H1 (cell line): ENCODE measurements at regions of chr2 and their contacts with region 1.

Region 1: DNA sequence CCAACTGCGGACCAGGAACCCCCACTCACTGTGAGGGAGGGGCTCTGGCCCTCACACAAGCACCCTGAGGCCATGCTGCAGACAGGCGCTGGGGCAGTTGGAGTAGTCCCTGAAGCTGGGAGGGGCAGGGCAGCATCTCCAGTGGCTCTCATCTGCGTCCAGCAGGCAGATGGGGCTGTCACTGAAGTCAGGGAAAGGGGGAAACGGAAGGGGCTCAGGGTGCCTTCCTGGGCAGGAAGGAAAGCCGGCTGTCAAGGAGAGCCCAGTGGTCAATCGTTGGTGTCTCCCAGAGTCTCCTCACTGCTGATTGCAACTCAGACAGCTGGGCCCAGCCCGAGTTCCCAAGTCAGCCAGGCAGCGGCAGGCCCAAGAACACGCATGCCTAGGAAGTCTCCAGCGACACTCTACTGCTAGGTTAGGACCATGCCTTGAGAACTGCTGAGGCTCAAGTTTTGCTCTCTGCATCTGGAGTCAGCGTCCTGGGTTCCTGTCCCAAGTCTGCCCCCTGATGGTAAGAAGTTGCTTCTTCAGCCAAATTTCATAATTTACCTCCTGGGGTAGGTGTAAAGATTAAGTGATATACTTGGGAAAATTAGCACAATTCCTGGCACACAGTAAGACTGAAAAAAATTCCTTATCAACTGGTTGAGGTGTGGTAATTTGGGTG is 27.5 kb upstream of the NMUR1 start:
- DNase-seq: peak; percentile 50 to 60
- H3K4me3 ChIP-seq: no peak overlapping the region
- H3K27ac ChIP-seq: no peak overlapping the region
- H3K4me1 ChIP-seq: no peaks in the 10 kb centered on the region; a peak in 1 of 7 replicates
- H3K27me3 ChIP-seq: no peaks in the 10 kb centered on the region; a peak in 1 of 7 replicates
- CTCF ChIP-seq: peak; percentile 51 to 88 (median 86)
- EP300 ChIP-seq: no peak
- POLR2A ChIP-seq: no peak
- RAD21 ChIP-seq: peak; percentile 75 to 83

Region 2: DNA sequence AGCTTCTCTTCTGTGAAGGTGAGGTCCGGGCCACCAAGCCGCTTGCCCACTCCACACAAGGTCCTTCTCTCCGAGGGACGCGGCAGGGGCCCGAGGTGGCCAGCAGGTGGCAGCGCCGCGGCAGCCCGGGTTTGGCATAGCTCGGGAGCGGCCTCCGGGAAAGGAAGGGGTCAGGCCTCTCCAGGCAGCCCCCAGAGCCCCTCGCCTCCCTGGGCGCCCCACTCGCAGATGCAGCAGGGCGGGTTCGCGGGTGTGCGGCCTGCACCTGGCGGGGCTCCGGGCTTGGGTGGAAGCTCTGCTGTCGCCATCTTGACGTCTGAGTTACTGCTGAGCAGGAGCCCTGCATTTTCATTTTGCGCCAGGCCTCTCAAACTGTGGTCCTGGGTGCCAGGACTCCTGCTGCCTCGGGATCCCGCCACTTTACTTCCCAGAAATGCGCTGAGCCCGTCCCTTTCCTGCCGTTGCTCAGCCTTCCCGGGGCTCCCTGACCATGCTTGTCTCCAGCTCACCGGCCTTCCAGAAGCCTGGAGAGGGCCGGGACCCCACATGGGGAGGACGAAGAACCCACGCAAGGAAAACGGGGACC is 74.8 kb before region 1 on chr2:
- CTCF ChIA-PET with region 1: interaction called, 18 read pairs
- POLR2A ChIA-PET with region 1: no interaction called
- DNase-seq: peak in 1 of 2 experiments; percentile 89
- H3K4me3 ChIP-seq: no peak overlapping the region
- H3K27ac ChIP-seq: no peak overlapping the region
- H3K4me1 ChIP-seq: peaks cover 0 to 2% (median 0%) of the 10 kb centered on the region in 4 experiments; a peak in 1 of 7 replicates
- H3K27me3 ChIP-seq: no peaks in the 10 kb centered on the region
- CTCF ChIP-seq: peak; percentile 75 to 85 (median 79)
- EP300 ChIP-seq: no peak
- POLR2A ChIP-seq: no peak
- RAD21 ChIP-seq: peak; percentile 37 to 67; a peak in 3 of 4 replicates

Region 3: GRCh38 chr2:231541645-231542044 is 16.1 kb before region 1 on chr2:
- CTCF ChIA-PET with region 1: interaction called, 24 read pairs
- POLR2A ChIA-PET with region 1: no interaction called
- DNase-seq: peak in 1 of 2 experiments; percentile 90
- H3K4me3 ChIP-seq: no peak overlapping the region
- H3K27ac ChIP-seq: no peak overlapping the region
- H3K4me1 ChIP-seq: 0 out of 7 replicates have a peak, but pooled peaks cover 0 to 2% (median 0%) of the 10 kb centered on the region in 4 experiments
- H3K27me3 ChIP-seq: no peaks in the 10 kb centered on the region
- CTCF ChIP-seq: peak; percentile 93 to 98 (median 93)
- EP300 ChIP-seq: no peak
- POLR2A ChIP-seq: no peak
- RAD21 ChIP-seq: peak; percentile 54 to 70; a peak in 3 of 4 replicates

Region 4: DNA sequence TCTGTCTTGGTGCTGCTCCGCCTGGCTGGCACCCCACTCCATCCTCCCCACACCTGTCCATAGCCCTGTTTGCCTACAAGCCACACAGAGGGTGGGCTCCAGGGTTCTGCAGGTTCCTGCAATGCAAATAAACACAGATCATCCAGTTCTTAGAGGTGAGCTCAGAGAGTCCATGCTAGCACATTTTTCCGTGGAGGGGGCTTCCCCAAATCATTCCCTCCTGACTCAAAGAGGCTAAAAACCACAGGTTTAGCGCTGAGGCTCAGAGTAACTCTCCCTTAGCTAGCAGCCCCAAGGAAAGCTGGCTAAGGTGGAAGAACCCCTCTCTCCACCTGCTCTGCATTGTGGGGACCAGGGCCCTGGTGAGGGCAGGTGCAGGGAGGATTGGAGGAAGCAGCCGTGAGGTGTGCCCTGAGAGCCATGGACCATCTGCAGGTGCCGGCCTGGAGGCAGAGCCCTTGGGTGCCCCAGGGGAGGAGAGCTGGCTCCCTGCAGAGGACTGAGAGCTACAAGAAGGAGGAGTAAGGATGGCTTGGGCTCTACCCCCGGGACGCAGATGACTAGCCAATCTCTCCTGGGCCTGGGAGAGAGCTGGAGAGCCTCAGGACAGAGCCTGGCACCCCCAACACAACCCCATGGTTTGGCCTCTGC is 11.2 kb after region 1 on chr2:
- CTCF ChIA-PET with region 1: interaction called, 18 read pairs
- POLR2A ChIA-PET with region 1: interaction called, 5 read pairs
- DNase-seq: no peak
- H3K4me3 ChIP-seq: no peak overlapping the region
- H3K27ac ChIP-seq: no peak overlapping the region
- H3K4me1 ChIP-seq: peaks cover 0 to 26% (median 17%) of the 10 kb centered on the region in 4 experiments; a peak in 6 of 7 replicates
- H3K27me3 ChIP-seq: no peaks in the 10 kb centered on the region
- CTCF ChIP-seq: no peak
- EP300 ChIP-seq: no peak
- POLR2A ChIP-seq: no peak
- RAD21 ChIP-seq: no peak